CD8-positive, alpha-beta T cell (primary cell): ENCODE measurements at regions of chr15 and their contacts with region 1.

Region 1: DNA sequence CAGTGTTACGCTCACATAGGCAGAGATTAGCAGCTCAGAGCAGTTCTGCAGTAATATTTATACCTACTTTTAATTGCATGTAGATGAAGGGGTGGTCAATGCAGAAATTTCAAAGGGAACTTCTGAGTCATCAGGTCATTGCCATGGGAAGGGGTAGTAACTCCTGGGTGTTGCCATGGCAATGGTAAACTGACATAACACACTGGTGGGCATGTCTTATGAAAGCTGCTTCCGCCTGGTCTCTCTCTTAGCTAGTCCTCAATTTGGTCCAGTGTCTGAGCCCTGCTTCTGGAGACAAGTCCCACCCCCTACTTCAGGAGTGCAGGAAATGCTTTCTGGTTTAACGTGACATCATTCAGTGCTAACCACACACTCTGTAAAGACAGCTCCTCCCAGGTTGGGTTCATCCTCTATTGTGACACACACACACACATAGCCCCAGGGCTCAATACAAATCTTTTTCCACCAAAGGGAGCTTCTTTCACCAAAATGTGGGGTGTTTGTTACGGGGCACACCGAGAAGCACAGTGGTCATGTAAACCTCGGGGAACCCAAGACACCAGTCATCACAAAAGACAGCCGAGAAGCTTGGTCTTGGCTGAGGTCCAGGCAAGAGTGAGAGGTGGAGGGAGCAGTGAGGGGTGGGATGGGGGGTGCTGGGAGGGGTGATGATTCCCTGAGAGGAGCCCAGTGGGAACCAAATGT is 74.5 kb downstream of the TLE3 start:
- DNase-seq: peak; percentile 24 to 94 (median 55)
- ATAC-seq: peak; percentile 98
- H3K4me3 ChIP-seq: no peak overlapping the region
- H3K4me3 Mint-ChIP-seq: peak overlapping the region; percentile 48
- H3K27ac ChIP-seq: peak overlapping the region in 1 of 2 experiments; percentile 43
- H3K27ac Mint-ChIP-seq: peak overlapping the region; percentile 84
- H3K4me1 ChIP-seq: peaks cover 13% of the 10 kb centered on the region
- H3K4me1 Mint-ChIP-seq: peaks cover 19% of the 10 kb centered on the region
- H3K27me3 ChIP-seq: no peaks in the 10 kb centered on the region
- H3K27me3 Mint-ChIP-seq: peaks cover 5% of the 10 kb centered on the region
- CTCF ChIP-seq: no peak

Region 2: GRCh38 chr15:68795298-68795848 is 1227.8 kb before region 1 on chr15:
- CTCF ChIA-PET with region 1: no interaction called
- POLR2A ChIA-PET with region 1: no interaction called
- intact Hi-C with region 1: loop called in 1 of 2 experiments (anchors 10 kb)
- DNase-seq: peak in 8 of 9 experiments; percentile 33 to 77 (median 66)
- ATAC-seq: peak; percentile 59
- H3K4me3 ChIP-seq: peak overlapping the region; percentile 4 to 10
- H3K4me3 Mint-ChIP-seq: peak overlapping the region; percentile 59
- H3K27ac ChIP-seq: peak overlapping the region; percentile 22 to 59
- H3K27ac Mint-ChIP-seq: peak overlapping the region; percentile 88
- H3K4me1 ChIP-seq: peaks cover 83% of the 10 kb centered on the region
- H3K4me1 Mint-ChIP-seq: peaks cover 96% of the 10 kb centered on the region
- H3K27me3 ChIP-seq: no peaks in the 10 kb centered on the region
- H3K27me3 Mint-ChIP-seq: no peaks in the 10 kb centered on the region
- CTCF ChIP-seq: no peak

Region 3: GRCh38 chr15:69729161-69729748 is 294.0 kb before region 1 on chr15:
- CTCF ChIA-PET with region 1: no interaction called
- POLR2A ChIA-PET with region 1: no interaction called
- intact Hi-C with region 1: loop called in 1 of 2 experiments (anchors 1 kb)
- DNase-seq: peak; percentile 56 to 86 (median 79)
- ATAC-seq: peak; percentile 62
- H3K4me3 ChIP-seq: no peak overlapping the region
- H3K4me3 Mint-ChIP-seq: no peak overlapping the region
- H3K27ac ChIP-seq: no peak overlapping the region
- H3K27ac Mint-ChIP-seq: no peak overlapping the region
- H3K4me1 ChIP-seq: peaks cover 12% of the 10 kb centered on the region
- H3K4me1 Mint-ChIP-seq: peaks cover 20% of the 10 kb centered on the region
- H3K27me3 ChIP-seq: peaks cover 0 to 4% of the 10 kb centered on the region in 2 experiments
- H3K27me3 Mint-ChIP-seq: no peaks in the 10 kb centered on the region
- CTCF ChIP-seq: peak; percentile 81

Region 4: GRCh38 chr15:69755551-69756310 is 267.5 kb before region 1 on chr15:
- CTCF ChIA-PET with region 1: no interaction called
- POLR2A ChIA-PET with region 1: no interaction called
- intact Hi-C with region 1: loop called in 1 of 2 experiments (anchors 10 kb)
- DNase-seq: peak; percentile 16 to 89 (median 77)
- ATAC-seq: peak; percentile 70
- H3K4me3 ChIP-seq: peak overlapping the region; percentile 4 to 5
- H3K4me3 Mint-ChIP-seq: peak overlapping the region; percentile 58
- H3K27ac ChIP-seq: no peak overlapping the region
- H3K27ac Mint-ChIP-seq: peak overlapping the region; percentile 86
- H3K4me1 ChIP-seq: peaks cover 72% of the 10 kb centered on the region
- H3K4me1 Mint-ChIP-seq: peaks cover 75% of the 10 kb centered on the region
- H3K27me3 ChIP-seq: peaks cover 0 to 3% of the 10 kb centered on the region in 2 experiments
- H3K27me3 Mint-ChIP-seq: peaks cover 7% of the 10 kb centered on the region
- CTCF ChIP-seq: no peak